ENCODE measurements at regions of chr17 and their contacts with region 1.

Region 1: DNA sequence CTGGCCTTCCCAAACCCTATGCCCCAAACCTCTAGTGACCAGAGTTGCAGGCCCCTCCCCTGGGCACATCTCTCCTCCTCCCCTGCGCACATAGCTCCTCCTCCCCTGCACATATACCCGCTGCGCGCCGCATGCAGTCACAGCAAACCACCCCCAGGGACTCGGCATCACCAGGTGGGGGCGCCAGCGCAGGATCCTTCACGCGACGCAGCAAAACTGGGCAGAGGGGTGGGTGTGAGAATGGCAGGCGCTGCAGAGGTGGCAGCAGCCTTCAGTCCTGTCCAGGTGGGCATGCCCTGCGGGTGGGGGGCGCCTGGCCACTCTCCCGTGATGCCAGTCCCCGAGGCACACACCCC is 5.6 kb downstream of the CORO6 start:
- DNase-seq: peak; percentile 95
- ATAC-seq: peak; percentile 65
- H3K4me3 Mint-ChIP-seq: peak overlapping the region; percentile 81
- H3K27ac Mint-ChIP-seq: peak overlapping the region; percentile 94
- H3K4me1 Mint-ChIP-seq: peaks cover 64% of the 10 kb centered on the region
- H3K27me3 Mint-ChIP-seq: peaks cover 3% of the 10 kb centered on the region

Region 2: DNA sequence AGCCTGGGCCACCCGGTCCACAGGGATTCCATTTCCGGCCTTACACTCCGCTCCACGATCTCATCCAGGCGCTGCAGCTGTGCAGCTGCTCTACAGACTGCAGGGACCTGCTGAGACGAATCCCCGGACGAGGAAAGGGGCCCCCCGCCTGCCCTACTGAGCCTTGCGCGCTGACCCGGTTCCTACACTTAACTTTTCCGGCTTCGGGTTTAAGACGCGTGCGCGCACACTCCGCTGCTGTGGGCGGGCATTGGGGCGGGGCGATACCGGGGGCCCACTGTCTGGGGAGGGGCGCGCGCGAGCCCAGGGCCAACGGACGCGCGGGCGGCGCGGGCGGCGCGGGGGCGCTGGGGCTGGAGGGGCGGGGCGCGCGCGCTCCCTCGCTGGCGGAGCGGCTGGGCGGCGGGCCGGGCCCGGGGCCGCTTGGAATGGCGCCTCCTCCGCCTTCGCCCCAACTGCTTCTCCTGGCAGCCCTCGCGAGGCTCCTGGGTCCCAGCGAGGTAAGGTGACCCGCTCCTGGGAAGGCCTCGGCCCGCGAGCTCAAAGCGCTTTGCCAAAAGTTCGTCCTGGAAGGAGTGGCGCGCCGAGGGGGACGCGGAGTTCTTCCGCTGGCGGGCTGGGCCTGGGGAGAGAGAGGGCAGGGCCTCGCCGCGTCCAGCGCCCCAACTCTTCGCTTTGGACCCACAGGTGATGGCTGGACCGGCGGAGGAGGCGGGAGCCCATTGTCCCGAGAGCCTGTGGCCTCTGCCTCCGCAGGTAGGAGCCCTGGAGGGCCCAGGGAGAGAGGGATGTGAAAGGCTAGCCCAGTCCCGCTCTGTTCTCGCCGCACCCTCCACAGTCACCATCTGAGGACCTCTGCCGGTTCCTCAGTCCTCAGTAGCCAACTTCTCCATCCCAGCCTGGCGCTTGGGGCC is 48.5 kb before region 1 on chr17 and contains the start of gene TP53I13:
- CTCF ChIA-PET with region 1: interaction called, 99 read pairs
- POLR2A ChIA-PET with region 1: interaction called, 26 read pairs
- DNase-seq: peak; percentile 92
- ATAC-seq: peak; percentile 63
- H3K4me3 Mint-ChIP-seq: peak within 1 kb of the TSS; percentile 94
- H3K27ac Mint-ChIP-seq: peak within 1 kb of the TSS; percentile 98
- H3K4me1 Mint-ChIP-seq: peaks cover 35% of the 10 kb centered on the region
- H3K27me3 Mint-ChIP-seq: no peaks in the 10 kb centered on the region
- total RNA-seq, gene TP53I13: 96.7 to 97.9 TPM

Region 3: DNA sequence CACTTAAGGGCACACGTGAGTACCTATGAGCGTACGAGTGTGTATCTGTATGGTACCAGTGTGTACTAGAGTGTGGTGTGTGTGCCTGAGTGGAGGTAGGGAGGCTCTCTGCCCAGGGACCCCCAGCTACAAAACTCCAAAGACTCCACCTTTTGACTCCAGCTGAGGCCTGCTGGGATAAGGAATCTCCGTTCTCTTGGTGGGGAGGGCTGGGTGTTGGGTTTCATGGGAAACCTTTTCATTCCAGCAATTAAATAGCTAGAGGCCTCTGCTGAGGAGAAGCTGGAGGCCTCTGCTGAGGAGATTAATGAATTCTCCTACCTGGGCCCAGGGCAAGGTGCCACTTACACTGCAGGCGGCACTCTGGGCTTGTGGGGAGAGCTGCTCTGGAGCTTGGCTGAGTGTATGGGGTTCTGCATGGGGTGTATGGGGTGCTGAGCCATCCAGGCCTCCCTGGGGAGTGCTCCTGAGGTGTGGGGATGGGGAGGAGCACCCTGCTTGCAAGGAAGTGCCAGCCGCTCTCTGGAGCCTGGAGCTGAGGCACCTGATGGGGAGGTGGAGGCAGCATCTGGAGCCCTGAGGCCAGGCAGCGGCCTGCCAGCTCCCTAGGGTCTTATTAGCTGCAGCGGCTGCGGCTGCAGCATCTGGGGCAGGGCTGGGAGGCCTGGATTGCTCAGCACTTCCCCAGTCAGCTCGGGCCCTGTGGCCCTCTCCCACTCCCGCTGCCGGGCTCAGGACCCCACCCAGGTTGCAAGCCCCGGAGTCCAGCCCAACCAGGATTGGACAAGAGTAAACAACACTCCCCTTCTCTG is 19.5 kb before region 1 on chr17:
- CTCF ChIA-PET with region 1: interaction called, 107 read pairs
- POLR2A ChIA-PET with region 1: interaction called, 10 read pairs
- DNase-seq: no peak
- ATAC-seq: no peak
- H3K4me3 Mint-ChIP-seq: no peak overlapping the region
- H3K27ac Mint-ChIP-seq: no peak overlapping the region
- H3K4me1 Mint-ChIP-seq: peaks cover 18% of the 10 kb centered on the region
- H3K27me3 Mint-ChIP-seq: no peaks in the 10 kb centered on the region

Region 4: GRCh38 chr17:29664743-29665480 is 47.8 kb after region 1 on chr17:
- CTCF ChIA-PET with region 1: interaction called, 12 read pairs
- POLR2A ChIA-PET with region 1: interaction called, 5 read pairs
- DNase-seq: no peak
- ATAC-seq: no peak
- H3K4me3 Mint-ChIP-seq: no peak overlapping the region
- H3K27ac Mint-ChIP-seq: peak overlapping the region; percentile 39
- H3K4me1 Mint-ChIP-seq: peaks cover 20% of the 10 kb centered on the region
- H3K27me3 Mint-ChIP-seq: no peaks in the 10 kb centered on the region

Region 5: DNA sequence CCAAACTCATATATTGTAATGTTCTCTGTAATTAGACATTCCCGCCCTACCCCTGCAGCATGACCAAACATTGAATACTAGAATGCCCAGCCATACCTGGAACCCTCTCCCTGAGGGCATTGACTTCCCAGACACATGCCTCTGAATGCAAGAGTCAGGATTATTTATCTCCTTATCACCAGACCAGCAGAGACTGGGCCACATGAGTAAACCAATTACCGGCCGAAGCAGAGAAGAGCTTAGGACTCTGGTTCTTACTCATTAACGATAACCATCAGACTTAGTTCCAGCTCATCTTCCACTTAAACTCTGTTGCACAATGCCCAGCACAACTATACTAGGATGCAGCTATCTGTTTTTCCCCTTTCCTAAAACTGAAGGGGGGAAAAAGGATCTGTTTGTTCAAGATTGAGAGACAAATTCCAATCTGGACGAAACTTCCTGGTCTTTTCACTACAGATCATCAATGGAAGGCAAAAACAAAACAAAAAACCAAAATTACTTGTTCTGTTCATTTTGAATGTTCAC is 93.9 kb after region 1 on chr17:
- CTCF ChIA-PET with region 1: interaction called, 39 read pairs
- POLR2A ChIA-PET with region 1: interaction called, 14 read pairs
- DNase-seq: no peak
- ATAC-seq: no peak
- H3K4me3 Mint-ChIP-seq: no peak overlapping the region
- H3K27ac Mint-ChIP-seq: no peak overlapping the region
- H3K4me1 Mint-ChIP-seq: peaks cover 48% of the 10 kb centered on the region
- H3K27me3 Mint-ChIP-seq: no peaks in the 10 kb centered on the region

Region 6: DNA sequence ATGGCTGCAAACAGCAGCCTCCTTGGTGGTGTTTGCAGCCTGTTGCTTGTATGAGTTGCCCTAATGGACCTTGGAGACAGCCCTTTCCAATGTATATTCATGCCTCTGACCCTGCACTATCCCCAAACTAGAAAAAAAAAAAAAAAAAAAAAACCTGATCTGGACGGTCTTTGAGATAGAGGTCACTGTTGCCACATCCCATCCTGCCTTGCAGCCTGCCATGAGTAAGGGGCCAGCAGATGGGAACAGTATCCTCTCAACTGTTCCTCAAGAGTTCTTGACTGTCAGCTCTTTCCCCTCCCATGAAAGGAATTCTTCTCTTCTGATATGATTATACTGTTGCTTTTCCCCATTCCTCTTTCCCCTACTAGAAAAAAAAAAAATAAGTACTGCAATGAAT is 160.6 kb after region 1 on chr17:
- CTCF ChIA-PET with region 1: interaction called, 75 read pairs
- POLR2A ChIA-PET with region 1: interaction called, 5 read pairs
- DNase-seq: no peak
- ATAC-seq: no peak
- H3K4me3 Mint-ChIP-seq: no peak overlapping the region
- H3K27ac Mint-ChIP-seq: no peak overlapping the region
- H3K4me1 Mint-ChIP-seq: peaks cover 13% of the 10 kb centered on the region
- H3K27me3 Mint-ChIP-seq: no peaks in the 10 kb centered on the region

Measured in activated CD8-positive, alpha-beta T cell treated with anti-CD3 and anti-CD28 coated beads, Interleukin-2, amount 10 ng/mL, durations not matched to agents 7 days and 5 days (primary cell).